ENCODE measurements at regions of chr6 and their contacts with region 1.

Region 1: GRCh38 chr6:31366693-31367470 is 9.9 kb upstream of the HLA-B start:
- DNase-seq: peak; percentile 88
- ATAC-seq: peak; percentile 100
- H3K4me3 Mint-ChIP-seq: peak overlapping the region; percentile 60
- H3K27ac Mint-ChIP-seq: no peak overlapping the region
- H3K4me1 Mint-ChIP-seq: peaks cover 10% of the 10 kb centered on the region
- H3K27me3 Mint-ChIP-seq: peaks cover 58% of the 10 kb centered on the region

Region 2: GRCh38 chr6:30862156-30862875 is 504.6 kb before region 1 on chr6:
- CTCF ChIA-PET with region 1: no interaction called
- POLR2A ChIA-PET with region 1: no interaction called
- DNase-seq: no peak
- ATAC-seq: no peak
- H3K4me3 Mint-ChIP-seq: no peak overlapping the region
- H3K27ac Mint-ChIP-seq: no peak overlapping the region
- H3K4me1 Mint-ChIP-seq: no peaks in the 10 kb centered on the region
- H3K27me3 Mint-ChIP-seq: no peaks in the 10 kb centered on the region

Region 3: GRCh38 chr6:31016659-31017299 is 350.1 kb before region 1 on chr6:
- CTCF ChIA-PET with region 1: no interaction called
- POLR2A ChIA-PET with region 1: no interaction called
- DNase-seq: no peak
- ATAC-seq: no peak
- H3K4me3 Mint-ChIP-seq: no peak overlapping the region
- H3K27ac Mint-ChIP-seq: no peak overlapping the region
- H3K4me1 Mint-ChIP-seq: no peaks in the 10 kb centered on the region
- H3K27me3 Mint-ChIP-seq: peaks cover 21% of the 10 kb centered on the region

Region 4: GRCh38 chr6:31128093-31128676 is 238.7 kb before region 1 on chr6:
- CTCF ChIA-PET with region 1: interaction called, 22 read pairs
- POLR2A ChIA-PET with region 1: no interaction called
- DNase-seq: peak; percentile 82
- ATAC-seq: peak; percentile 68
- H3K4me3 Mint-ChIP-seq: no peak overlapping the region
- H3K27ac Mint-ChIP-seq: no peak overlapping the region
- H3K4me1 Mint-ChIP-seq: no peaks in the 10 kb centered on the region
- H3K27me3 Mint-ChIP-seq: peaks cover 12% of the 10 kb centered on the region

Region 5: GRCh38 chr6:31158140-31158862 is 208.6 kb before region 1 on chr6 and contains the start of gene TCF19:
- CTCF ChIA-PET with region 1: interaction called, 21 read pairs
- POLR2A ChIA-PET with region 1: no interaction called
- DNase-seq: peak; percentile 100
- ATAC-seq: peak; percentile 95
- H3K4me3 Mint-ChIP-seq: peak within 1 kb of the TSS; percentile 91
- H3K27ac Mint-ChIP-seq: peak within 1 kb of the TSS; percentile 81
- H3K4me1 Mint-ChIP-seq: peaks cover 40% of the 10 kb centered on the region
- H3K27me3 Mint-ChIP-seq: no peaks in the 10 kb centered on the region
- total RNA-seq, gene TCF19: 122 to 125 TPM

Region 6: GRCh38 chr6:31203345-31203979 is 163.4 kb before region 1 on chr6:
- CTCF ChIA-PET with region 1: interaction called, 78 read pairs
- POLR2A ChIA-PET with region 1: interaction called, 28 read pairs
- DNase-seq: peak; percentile 50
- ATAC-seq: peak; percentile 45
- H3K4me3 Mint-ChIP-seq: peak overlapping the region; percentile 84
- H3K27ac Mint-ChIP-seq: peak overlapping the region; percentile 93
- H3K4me1 Mint-ChIP-seq: peaks cover 60% of the 10 kb centered on the region
- H3K27me3 Mint-ChIP-seq: no peaks in the 10 kb centered on the region

Region 7: DNA sequence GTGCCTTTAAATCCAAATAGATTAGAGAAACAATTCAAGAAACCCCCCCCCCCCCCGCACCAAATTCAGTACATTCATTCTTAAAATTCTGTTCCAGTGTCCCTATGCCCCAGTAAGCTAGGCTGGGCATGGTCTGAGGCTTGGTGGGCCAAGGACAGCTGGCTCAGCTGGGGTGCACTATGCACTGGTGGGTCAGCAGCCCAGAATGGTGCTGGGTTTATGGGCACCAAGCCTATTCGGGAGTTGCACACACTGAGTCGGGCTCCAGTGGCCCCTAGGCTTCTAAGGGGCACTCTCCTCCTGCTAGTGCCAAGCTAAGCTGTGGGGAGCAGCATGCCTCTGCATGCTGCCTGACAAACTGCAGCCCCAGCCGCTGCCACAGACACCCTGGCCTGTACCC is 10.1 kb after region 1 on chr6:
- CTCF ChIA-PET with region 1: interaction called, 20 read pairs
- POLR2A ChIA-PET with region 1: no interaction called
- DNase-seq: no peak
- ATAC-seq: no peak
- H3K4me3 Mint-ChIP-seq: no peak overlapping the region
- H3K27ac Mint-ChIP-seq: no peak overlapping the region
- H3K4me1 Mint-ChIP-seq: peaks cover 2% of the 10 kb centered on the region
- H3K27me3 Mint-ChIP-seq: peaks cover 30% of the 10 kb centered on the region

Region 8: DNA sequence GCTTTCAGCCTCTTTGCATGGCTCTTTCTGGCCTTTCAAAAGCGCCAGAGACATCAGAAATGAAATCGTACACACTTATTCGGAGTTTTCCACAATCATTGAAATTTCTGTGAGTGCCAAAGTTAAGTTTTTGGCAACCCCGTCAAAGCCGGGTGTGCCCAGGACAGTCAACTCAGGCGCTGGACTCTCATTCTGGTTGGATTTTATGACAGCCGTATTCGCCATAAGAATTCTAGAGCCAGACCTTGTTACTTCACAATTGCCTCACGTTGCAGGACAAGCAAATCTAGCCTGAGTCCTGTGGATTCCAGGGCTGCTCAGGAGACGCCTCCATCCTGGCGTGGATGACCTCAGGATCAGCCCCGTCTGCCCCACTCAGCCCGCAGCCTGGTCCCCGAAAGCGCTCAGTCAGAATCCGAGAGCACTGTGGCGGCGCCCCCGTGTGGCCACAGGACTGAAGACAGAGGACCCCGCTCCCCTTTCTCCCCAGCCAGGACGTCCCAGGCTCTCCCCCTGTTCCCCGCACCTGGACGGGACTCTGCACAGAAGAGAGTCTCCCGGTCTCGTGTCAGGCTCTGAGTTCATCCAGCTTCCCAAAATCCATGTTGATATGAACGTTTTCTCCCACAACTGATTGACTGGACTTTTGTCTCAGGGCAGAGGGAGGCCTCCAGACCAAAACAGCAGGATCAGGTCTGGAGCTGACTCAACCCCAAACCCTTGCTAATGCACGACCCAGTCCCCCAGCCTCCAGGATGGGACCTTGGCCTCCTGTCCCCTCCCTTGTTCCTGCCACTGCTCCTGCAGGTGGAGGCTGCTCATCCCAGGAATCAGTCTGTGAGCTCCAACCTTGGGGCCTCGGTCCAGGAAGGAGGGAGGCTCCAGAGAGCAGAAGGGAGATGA is 74.7 kb after region 1 on chr6:
- CTCF ChIA-PET with region 1: interaction called, 11 read pairs
- POLR2A ChIA-PET with region 1: no interaction called
- DNase-seq: peak; percentile 88
- ATAC-seq: peak; percentile 98
- H3K4me3 Mint-ChIP-seq: no peak overlapping the region
- H3K27ac Mint-ChIP-seq: no peak overlapping the region
- H3K4me1 Mint-ChIP-seq: peaks cover 6% of the 10 kb centered on the region
- H3K27me3 Mint-ChIP-seq: peaks cover 56% of the 10 kb centered on the region